HepG2 (cell line): ENCODE measurements at regions of chr20 and their contacts with region 1.

Region 1: DNA sequence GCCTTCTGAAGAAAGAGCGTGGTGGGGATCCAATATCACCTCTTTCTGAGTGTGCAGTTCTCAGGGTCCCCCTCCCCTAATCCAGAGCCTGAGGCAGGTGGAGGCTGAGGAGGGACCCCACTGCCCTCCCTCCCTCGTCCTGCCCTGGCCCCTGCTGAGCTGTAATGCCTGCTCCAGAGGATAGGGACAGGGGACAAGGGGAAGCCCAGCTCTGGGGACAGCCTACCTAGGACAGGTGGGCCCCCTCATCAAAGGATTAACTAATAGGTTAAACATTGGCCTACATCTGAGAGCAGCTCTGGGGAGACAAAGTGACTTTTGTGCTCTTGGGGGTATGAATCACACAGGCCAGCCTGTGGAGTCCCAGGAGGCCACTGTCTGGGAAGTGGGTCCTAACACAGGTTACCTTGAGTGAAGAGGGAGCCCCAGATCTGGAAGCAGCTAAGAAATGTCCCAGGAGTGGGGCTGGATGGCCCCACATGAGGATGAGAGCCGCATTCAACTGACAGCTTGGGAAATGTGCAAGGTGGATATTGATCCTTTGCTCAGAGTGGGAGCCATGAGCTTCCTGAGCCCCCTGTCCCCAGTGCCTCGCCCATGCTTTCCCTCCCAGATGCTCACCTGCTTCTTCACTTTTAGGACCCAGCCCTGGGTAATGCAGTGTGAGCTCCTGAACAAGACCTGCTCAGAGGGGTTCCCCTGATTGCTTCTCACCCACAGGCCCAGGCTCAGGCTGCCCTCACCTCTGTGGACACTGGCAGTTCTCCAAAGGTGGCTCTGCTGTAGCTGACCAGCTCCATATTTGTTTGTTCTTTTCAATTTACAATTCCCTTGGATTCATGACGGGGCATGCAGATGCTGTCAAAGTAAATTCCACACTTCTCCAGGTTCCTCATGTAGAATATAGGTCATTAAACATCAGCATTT is 17.8 kb upstream of the CST9L start:
- DNase-seq: peak; percentile 96
- ATAC-seq: peak; percentile 89
- H3K4me3 ChIP-seq: peak overlapping the region; percentile 23 to 58 (median 30)
- H3K27ac ChIP-seq: peak overlapping the region; percentile 80
- H3K4me1 ChIP-seq: peaks cover 66% of the 10 kb centered on the region
- H3K27me3 ChIP-seq: no peaks in the 10 kb centered on the region
- CTCF ChIP-seq: peak; percentile 17; the same call in 1 of the 2 replicates
- EP300 ChIP-seq: peak in 1 of 2 experiments; percentile 93; a peak in 3 of 4 replicates
- POLR2A ChIP-seq: peak; percentile 45 to 75
- RAD21 ChIP-seq: no peak

Region 2: GRCh38 chr20:23420943-23421931 is 164.8 kb before region 1 on chr20 and contains the start of gene NAPB:
- CTCF ChIA-PET with region 1: no interaction called
- POLR2A ChIA-PET with region 1: interaction called, 13 read pairs
- in situ Hi-C with region 1: no loop called
- intact Hi-C with region 1: no loop called
- DNase-seq: peak; percentile 92
- ATAC-seq: peak; percentile 98
- H3K4me3 ChIP-seq: peak within 1 kb of the TSS; percentile 76 to 99 (median 93)
- H3K27ac ChIP-seq: peak within 1 kb of the TSS; percentile 66
- H3K4me1 ChIP-seq: peaks cover 62% of the 10 kb centered on the region
- H3K27me3 ChIP-seq: no peaks in the 10 kb centered on the region
- CTCF ChIP-seq: peak; percentile 53; the same call in 1 of the 2 replicates
- EP300 ChIP-seq: no peak; a peak in 1 of 4 replicates
- POLR2A ChIP-seq: peak; percentile 75 to 96
- RAD21 ChIP-seq: no peak
- total RNA-seq, gene NAPB: 9.5 and 15.2 TPM in 2 replicates

Region 3: DNA sequence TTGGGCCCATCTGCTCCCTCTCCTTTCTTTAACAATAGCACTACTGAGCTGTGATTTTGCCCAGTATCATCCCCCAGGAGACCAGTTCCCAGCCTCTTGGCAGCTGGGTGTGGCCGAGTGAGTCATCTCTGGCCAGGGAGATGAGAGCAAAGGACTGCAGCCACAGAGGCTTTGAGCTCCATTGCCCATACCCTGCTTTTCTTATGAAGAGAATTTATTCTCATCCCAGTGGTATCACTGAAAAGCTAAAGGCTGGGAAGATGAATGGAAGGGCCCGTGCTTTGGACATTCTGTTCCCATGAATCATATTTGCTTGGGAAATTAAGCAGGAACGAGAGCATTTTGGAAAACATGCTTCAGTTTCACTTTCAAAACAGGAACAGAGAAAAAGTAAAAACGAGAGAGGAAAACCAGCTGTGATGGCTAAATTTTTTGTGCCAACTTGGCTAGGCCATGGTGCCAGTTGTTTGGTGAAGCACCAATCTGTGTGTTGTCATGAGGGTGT is 36.8 kb after region 1 on chr20:
- CTCF ChIA-PET with region 1: no interaction called
- POLR2A ChIA-PET with region 1: interaction called, 34 read pairs
- in situ Hi-C with region 1: no loop called
- intact Hi-C with region 1: no loop called
- DNase-seq: peak; percentile 72
- ATAC-seq: peak; percentile 78
- H3K4me3 ChIP-seq: peak overlapping the region; percentile 42 to 49 (median 44)
- H3K27ac ChIP-seq: no peak overlapping the region
- H3K4me1 ChIP-seq: peaks cover 73% of the 10 kb centered on the region
- H3K27me3 ChIP-seq: no peaks in the 10 kb centered on the region
- CTCF ChIP-seq: no peak
- EP300 ChIP-seq: no peak
- POLR2A ChIP-seq: no peak
- RAD21 ChIP-seq: no peak

Region 4: DNA sequence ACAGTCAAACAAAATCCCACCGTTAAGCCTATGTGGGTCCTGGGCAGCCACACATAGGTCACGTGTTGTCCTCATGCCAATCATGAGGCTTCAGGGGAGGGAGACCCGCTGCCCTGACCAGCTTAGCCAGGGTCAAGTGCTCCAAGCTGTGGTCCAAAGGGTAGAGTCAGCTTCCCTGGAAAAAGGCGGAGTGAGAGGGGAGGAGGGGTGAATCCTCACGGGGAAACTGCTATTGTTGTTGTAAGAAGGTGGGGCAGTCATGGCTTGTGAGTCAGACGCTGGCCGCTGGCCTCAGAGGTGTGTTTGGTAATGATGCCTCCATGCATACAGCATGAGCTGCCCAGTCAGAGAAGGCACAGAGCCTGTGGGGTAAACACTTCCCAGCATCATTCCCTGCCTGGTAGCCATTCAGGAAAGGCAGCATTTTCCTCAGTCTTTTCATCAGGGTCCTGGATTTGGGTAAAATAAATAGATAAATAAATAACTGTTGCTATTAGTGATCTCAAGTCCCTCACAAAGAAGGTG is 43.0 kb after region 1 on chr20:
- CTCF ChIA-PET with region 1: no interaction called
- POLR2A ChIA-PET with region 1: interaction called, 34 read pairs
- in situ Hi-C with region 1: no loop called
- intact Hi-C with region 1: no loop called
- DNase-seq: peak; percentile 98
- ATAC-seq: peak; percentile 87
- H3K4me3 ChIP-seq: peak overlapping the region in 1 of 3 experiments; percentile 39; a peak in 1 of 6 replicates
- H3K27ac ChIP-seq: peak overlapping the region; percentile 70
- H3K4me1 ChIP-seq: peaks cover 80% of the 10 kb centered on the region
- H3K27me3 ChIP-seq: no peaks in the 10 kb centered on the region
- CTCF ChIP-seq: peak; percentile 31
- EP300 ChIP-seq: peak; percentile 76 to 80; a peak in 3 of 4 replicates
- POLR2A ChIP-seq: peak; percentile 40 to 50; a peak in 1 of 4 replicates
- RAD21 ChIP-seq: no peak; the same call in 1 of the 2 replicates

Region 5: GRCh38 chr20:23655491-23656211 is 69.6 kb after region 1 on chr20:
- CTCF ChIA-PET with region 1: no interaction called
- POLR2A ChIA-PET with region 1: interaction called, 4 read pairs
- in situ Hi-C with region 1: no loop called
- intact Hi-C with region 1: loop called (anchors 2 kb)
- DNase-seq: no peak
- ATAC-seq: no peak
- H3K4me3 ChIP-seq: no peak overlapping the region
- H3K27ac ChIP-seq: no peak overlapping the region
- H3K4me1 ChIP-seq: peaks cover 89% of the 10 kb centered on the region
- H3K27me3 ChIP-seq: no peaks in the 10 kb centered on the region
- CTCF ChIP-seq: no peak
- EP300 ChIP-seq: no peak
- POLR2A ChIP-seq: no peak
- RAD21 ChIP-seq: no peak

Region 6: GRCh38 chr20:23663180-23663579 is 77.1 kb after region 1 on chr20:
- CTCF ChIA-PET with region 1: no interaction called
- POLR2A ChIA-PET with region 1: interaction called, 21 read pairs
- in situ Hi-C with region 1: no loop called
- intact Hi-C with region 1: loop called (anchors 2 kb)
- DNase-seq: no peak
- ATAC-seq: no peak
- H3K4me3 ChIP-seq: no peak overlapping the region
- H3K27ac ChIP-seq: peak overlapping the region; percentile 93
- H3K4me1 ChIP-seq: peaks cover 69% of the 10 kb centered on the region
- H3K27me3 ChIP-seq: no peaks in the 10 kb centered on the region
- CTCF ChIP-seq: no peak
- EP300 ChIP-seq: no peak
- POLR2A ChIP-seq: no peak
- RAD21 ChIP-seq: no peak